ENCODE measurements at regions of chr10 and their contacts with region 1.

Region 1: DNA sequence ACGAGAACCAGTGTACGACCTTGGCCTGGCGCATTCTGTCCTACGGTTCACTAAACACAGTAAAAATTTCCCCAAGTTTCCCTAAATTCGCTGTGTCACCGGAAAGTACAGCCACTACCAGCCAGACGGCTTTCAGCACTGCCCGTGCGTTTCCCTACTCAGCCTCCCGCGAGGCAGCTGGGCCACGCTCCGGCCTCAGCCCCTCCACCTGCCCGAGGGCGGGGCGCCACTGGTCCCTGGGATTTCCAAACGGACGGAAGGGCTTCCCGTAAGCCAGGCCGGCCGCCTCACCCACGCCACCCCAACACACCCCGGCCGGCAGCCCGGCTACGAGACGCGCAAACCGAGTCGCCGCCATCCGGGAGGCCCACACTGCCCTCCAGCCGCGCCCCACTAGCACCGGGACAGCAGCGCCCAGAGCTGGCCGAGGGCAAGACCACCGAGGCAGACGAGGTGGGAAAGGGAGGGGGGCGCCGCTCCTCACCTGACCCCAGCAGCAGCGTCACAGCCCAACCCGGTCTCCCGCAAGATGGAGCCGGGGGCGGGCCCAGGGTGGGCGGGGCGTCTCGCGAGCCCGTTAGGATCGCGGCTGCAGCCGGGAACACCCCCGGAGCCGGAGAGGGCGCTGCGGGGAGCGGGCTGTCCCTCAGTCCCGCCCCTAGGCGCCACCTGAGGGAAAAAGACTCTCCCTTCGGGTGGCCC is at the start of gene ANXA7:
- DNase-seq: peak; percentile 96
- H3K4me3 Mint-ChIP-seq: peak within 1 kb of the TSS; percentile 95
- H3K27ac Mint-ChIP-seq: peak within 1 kb of the TSS; percentile 93
- H3K4me1 Mint-ChIP-seq: peaks cover 56% of the 10 kb centered on the region
- H3K27me3 Mint-ChIP-seq: peaks cover 5% of the 10 kb centered on the region
- total RNA-seq, gene ANXA7: 130 to 134 TPM

Region 2: DNA sequence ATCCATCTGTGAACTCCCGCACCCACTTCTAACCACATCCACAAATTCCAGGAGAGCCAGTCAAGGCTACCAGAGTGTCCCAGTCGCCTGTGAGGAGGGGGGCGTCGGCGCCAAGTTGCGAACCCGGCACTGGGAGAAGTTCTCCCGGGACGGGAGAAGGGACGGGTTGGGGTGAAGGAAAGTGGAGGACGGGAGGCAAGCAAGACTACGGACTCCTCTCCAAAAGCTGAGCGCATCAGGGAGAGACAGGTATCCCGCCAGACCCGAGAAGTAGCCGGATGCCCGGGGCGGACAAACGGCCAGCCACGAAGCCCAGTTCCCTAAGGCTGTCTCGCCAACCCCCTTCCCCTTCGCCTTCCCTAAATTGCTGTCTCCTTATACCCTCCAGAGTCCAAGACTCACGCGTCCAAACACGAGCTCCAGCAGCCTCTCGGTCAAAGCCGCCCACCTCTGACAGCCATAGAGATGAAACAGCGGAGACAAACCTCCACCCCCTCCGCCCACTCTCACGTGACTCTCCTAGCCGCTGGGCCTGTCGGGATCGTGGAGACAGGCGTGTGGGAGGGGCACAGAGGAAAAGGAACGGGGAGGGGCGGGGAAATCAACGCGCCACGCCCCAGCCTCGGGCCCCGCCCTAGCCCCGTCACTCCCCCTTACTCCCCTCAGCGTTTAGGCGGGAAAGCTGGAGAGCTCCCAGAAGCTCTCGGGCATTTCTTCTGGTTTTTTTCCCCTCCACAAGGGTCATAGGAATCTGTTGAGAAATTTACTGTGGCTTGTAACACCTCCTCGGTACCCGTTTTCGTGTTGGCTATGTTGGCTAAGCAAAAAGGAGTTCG is 787.9 kb before region 1 on chr10 and contains the start of gene MICU1:
- CTCF ChIA-PET with region 1: no interaction called
- intact Hi-C with region 1: loop called (anchors 5 kb)
- DNase-seq: peak; percentile 98
- H3K4me3 Mint-ChIP-seq: peak within 1 kb of the TSS; percentile 97
- H3K27ac Mint-ChIP-seq: peak within 1 kb of the TSS; percentile 73
- H3K4me1 Mint-ChIP-seq: peaks cover 16% of the 10 kb centered on the region
- H3K27me3 Mint-ChIP-seq: no peaks in the 10 kb centered on the region
- total RNA-seq, gene MICU1: 40.0 to 41.9 TPM

Region 3: DNA sequence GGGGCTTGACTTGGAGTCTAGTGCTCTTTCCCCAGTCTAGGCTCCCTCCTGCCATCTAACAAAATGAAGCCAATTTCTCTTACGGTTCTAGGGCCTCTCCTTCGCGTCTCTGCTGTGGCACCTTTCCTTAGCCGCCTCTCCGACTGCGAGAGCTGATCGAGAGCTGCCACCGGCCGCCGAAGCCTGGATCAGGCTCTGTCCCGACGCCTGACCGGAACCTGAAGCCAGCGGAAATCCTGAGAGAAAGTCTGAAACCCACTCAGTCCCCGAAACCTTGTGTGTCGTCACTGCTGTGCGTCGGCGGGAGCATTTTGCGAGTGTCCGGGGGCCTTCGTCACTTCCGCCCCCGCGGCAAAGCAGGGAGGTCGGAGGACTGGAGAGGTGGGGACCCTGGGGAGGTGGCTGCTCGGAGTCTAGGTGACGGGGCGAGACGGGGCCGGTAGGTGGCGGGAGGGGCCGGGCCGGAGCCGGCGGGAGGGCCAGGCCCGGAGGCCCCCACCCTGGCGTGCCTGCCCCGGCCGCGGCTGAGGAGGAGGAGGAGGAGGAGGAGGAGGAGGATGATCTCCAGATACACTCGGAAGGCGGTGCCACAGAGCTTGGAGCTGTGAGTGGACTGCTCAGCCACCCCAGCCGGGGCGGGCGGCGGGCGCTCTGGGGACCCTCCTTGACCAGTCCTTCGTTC is 245.8 kb before region 1 on chr10 and contains the starts of genes ECD and FAM149B1:
- CTCF ChIA-PET with region 1: no interaction called
- intact Hi-C with region 1: loop called (anchors 1 kb)
- DNase-seq: peak; percentile 96
- H3K4me3 Mint-ChIP-seq: peak within 1 kb of the TSS; percentile 100
- H3K27ac Mint-ChIP-seq: peak within 1 kb of the TSS; percentile 100
- H3K4me1 Mint-ChIP-seq: peaks cover 37% of the 10 kb centered on the region
- H3K27me3 Mint-ChIP-seq: no peaks in the 10 kb centered on the region
- total RNA-seq, gene ECD: 26.5 to 28.1 TPM
- total RNA-seq, gene FAM149B1: 13.3 to 13.7 TPM

Region 4: GRCh38 chr10:73358331-73359279 is 55.1 kb before region 1 on chr10 and contains the start of gene CFAP70:
- CTCF ChIA-PET with region 1: no interaction called
- intact Hi-C with region 1: loop called (anchors 1 kb)
- DNase-seq: peak; percentile 96
- H3K4me3 Mint-ChIP-seq: peak within 1 kb of the TSS; percentile 96
- H3K27ac Mint-ChIP-seq: peak within 1 kb of the TSS; percentile 74
- H3K4me1 Mint-ChIP-seq: peaks cover 10% of the 10 kb centered on the region
- H3K27me3 Mint-ChIP-seq: no peaks in the 10 kb centered on the region
- total RNA-seq, gene CFAP70: 0.20 to 0.31 TPM

Region 5: GRCh38 chr10:73591935-73592699 is 178.4 kb after region 1 on chr10:
- CTCF ChIA-PET with region 1: no interaction called
- intact Hi-C with region 1: loop called (anchors 5 kb)
- DNase-seq: peak; percentile 59
- H3K4me3 Mint-ChIP-seq: no peak overlapping the region
- H3K27ac Mint-ChIP-seq: peak overlapping the region; percentile 71
- H3K4me1 Mint-ChIP-seq: peaks cover 17% of the 10 kb centered on the region
- H3K27me3 Mint-ChIP-seq: no peaks in the 10 kb centered on the region

Measured in activated naive CD4-positive, alpha-beta T cell treated with anti-CD3 and anti-CD28 coated beads for 36 hours (primary cell).